ENCODE measurements at regions of chr15 and their contacts with region 1.

Region 1: DNA sequence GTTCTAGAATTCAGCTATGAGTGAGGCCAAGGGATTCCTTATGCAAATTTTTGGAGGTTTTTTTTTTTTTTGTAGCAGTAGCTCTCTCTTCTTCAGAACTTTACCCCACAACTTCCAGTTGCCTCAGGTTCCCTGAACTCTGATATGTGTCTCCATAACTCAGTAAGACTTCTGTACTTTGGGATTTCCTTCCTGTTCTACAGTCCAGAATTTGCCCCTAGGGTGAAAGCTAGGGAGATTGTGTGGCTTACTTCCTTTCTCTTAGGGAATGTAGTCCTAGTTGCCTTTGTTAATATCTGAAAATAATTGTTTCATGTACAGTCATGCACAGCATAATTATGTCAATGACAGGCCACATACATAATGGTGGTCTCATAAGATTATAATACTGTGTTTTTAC is 30.8 kb downstream of the LRRC28 start:
- DNase-seq: no peak
- H3K4me3 ChIP-seq: no peak overlapping the region
- H3K4me1 ChIP-seq: peaks cover 5% of the 10 kb centered on the region
- H3K27me3 ChIP-seq: no peaks in the 10 kb centered on the region

Region 2: GRCh38 chr15:99708556-99708955 is 426.4 kb after region 1 on chr15:
- in situ Hi-C with region 1: loop called (anchors 5 kb)
- DNase-seq: no peak
- H3K4me3 ChIP-seq: no peak overlapping the region
- H3K4me1 ChIP-seq: peaks cover 7% of the 10 kb centered on the region
- H3K27me3 ChIP-seq: no peaks in the 10 kb centered on the region

Region 3: GRCh38 chr15:100211855-100212850 is 930.0 kb after region 1 on chr15:
- in situ Hi-C with region 1: no loop called
- DNase-seq: no peak
- H3K4me3 ChIP-seq: no peak overlapping the region
- H3K4me1 ChIP-seq: no peaks in the 10 kb centered on the region
- H3K27me3 ChIP-seq: no peaks in the 10 kb centered on the region